SK-MEL-5 (cell line): ENCODE measurements at regions of chr5 and their contacts with region 1.

Region 1: DNA sequence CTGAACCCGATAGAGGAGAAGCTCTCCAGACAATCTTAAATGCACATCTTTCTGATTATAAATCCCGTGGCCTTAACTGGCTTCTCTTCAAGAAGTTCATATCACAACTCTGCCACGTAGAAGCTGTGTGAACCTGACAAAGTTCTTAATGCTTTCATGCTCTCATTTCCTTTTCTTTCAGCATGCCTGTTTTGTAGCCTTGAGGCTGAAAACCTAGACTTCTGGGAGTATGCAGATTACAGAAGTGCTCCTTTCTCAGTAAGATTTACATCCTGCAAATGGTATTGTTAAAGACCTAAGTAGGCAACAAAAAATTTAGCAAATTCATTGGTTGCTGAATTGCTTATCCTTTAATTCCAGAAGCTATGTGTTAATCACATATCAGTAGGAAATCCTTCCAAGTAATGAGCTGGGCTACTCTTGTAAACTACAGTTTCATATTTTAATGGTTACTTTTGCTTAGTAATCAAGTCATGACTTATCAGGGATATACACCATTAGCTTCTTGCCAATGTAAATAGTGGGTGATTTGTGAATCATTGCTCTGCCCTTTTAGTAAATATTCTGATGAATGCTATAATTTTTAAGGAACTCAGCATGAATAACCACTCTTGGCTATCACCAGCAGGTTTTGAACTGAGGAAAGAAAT is 334.7 kb downstream of the FBXL7 start:
- DNase-seq: no peak

Region 2: GRCh38 chr5:15510831-15511230 is 323.9 kb before region 1 on chr5:
- in situ Hi-C with region 1: loop called (anchors 10 kb)
- DNase-seq: no peak

Region 3: GRCh38 chr5:15995341-15996052 is 160.8 kb after region 1 on chr5:
- in situ Hi-C with region 1: loop called (anchors 25 kb)
- DNase-seq: peak; percentile 79

Region 4: DNA sequence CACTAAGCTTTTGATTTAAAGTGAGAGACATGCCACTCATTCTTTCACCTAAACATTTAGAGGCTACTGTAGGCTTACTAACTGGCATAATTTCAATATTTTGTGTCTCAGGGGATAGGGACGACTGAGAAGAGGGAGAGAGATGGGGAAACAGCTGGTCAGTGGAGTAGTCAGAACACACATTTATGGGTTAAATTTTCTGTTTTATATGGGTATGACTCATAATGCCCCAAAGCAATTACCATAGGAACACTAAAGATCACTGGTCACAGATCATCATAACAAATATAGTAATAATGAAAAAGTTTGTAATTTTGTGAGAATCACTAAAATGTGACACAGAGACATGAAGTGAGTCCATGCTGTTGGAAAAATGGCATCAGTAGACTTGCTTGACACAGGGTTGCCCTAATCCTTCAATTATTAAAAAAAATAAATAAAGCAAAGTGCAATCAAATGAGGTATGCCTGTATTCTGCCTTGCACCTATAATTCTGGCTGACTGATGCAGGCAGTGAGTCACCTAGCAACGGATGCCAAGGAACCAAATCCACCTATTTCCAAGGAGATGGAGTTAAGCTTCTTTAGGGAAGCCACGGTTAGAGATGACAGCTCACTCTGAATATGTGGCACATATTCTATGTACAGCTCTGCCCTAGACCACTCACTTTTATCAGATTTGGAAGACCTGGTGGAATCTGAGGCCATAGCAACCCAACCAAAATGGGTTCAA is 178.8 kb after region 1 on chr5:
- in situ Hi-C with region 1: no loop called
- DNase-seq: no peak